Activated CD4-positive, alpha-beta T cell treated with anti-CD3 and anti-CD28 coated beads, Interleukin-2, amount 10 ng/mL, durations not matched to agents 7 days and 5 days (primary cell): ENCODE measurements at regions of chr5 and their contacts with region 1.

Region 1: GRCh38 chr5:139574641-139575312 is 13.6 kb downstream of the UBE2D2 start:
- DNase-seq: peak; percentile 51
- H3K4me3 Mint-ChIP-seq: no peak overlapping the region
- H3K27ac Mint-ChIP-seq: peak overlapping the region; percentile 83
- H3K4me1 Mint-ChIP-seq: peaks cover 76% of the 10 kb centered on the region
- H3K27me3 Mint-ChIP-seq: no peaks in the 10 kb centered on the region

Region 2: GRCh38 chr5:139560752-139561654 is 13.8 kb before region 1 on chr5 and contains the start of gene UBE2D2:
- CTCF ChIA-PET with region 1: interaction called, 21 read pairs
- POLR2A ChIA-PET with region 1: interaction called, 3 read pairs
- DNase-seq: peak; percentile 97
- H3K4me3 Mint-ChIP-seq: peak within 1 kb of the TSS; percentile 89
- H3K27ac Mint-ChIP-seq: peak within 1 kb of the TSS; percentile 96
- H3K4me1 Mint-ChIP-seq: peaks cover 37% of the 10 kb centered on the region
- H3K27me3 Mint-ChIP-seq: no peaks in the 10 kb centered on the region
- total RNA-seq, gene UBE2D2: 231 to 265 TPM